Panc1 (cell line): ENCODE measurements at regions of chr7 and their contacts with region 1.

Region 1: GRCh38 chr7:84612981-84613681 is 418.5 kb upstream of the SEMA3A start:
- DNase-seq: no peak
- ATAC-seq: no peak
- H3K4me3 ChIP-seq: no peak overlapping the region
- H3K27ac ChIP-seq: no peak overlapping the region
- H3K4me1 ChIP-seq: no peaks in the 10 kb centered on the region
- H3K27me3 ChIP-seq: no peaks in the 10 kb centered on the region
- CTCF ChIP-seq: no peak

Region 2: DNA sequence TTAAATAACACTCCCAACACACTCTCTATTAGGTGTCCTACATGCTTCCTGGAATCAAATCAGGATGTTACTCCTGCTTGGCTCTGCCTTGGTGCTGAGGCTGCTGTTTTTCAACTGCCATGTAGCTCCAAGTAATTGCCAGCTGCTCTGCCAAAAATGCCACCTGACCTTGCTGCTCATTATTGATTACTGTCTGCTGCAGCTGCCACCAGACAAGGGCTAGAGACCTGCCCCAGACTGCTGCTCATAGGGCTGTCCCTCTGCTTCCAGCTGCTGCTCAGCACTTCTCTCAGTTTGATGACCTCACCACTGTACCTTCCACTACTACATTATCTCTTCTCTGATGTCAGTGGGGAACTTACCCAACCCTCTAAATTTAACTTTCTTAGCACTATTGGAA is 1552.9 kb before region 1 on chr7:
- CTCF ChIA-PET with region 1: no interaction called
- POLR2A ChIA-PET with region 1: interaction called, 14 read pairs
- in situ Hi-C with region 1: no loop called
- intact Hi-C with region 1: no loop called
- DNase-seq: no peak
- ATAC-seq: no peak
- H3K4me3 ChIP-seq: no peak overlapping the region
- H3K27ac ChIP-seq: no peak overlapping the region
- H3K4me1 ChIP-seq: no peaks in the 10 kb centered on the region
- H3K27me3 ChIP-seq: no peaks in the 10 kb centered on the region
- CTCF ChIP-seq: no peak